Posterior vena cava (tissue), 2 donors: ENCODE measurements at regions of chr9 and their contacts with region 1.

Region 1: GRCh38 chr9:35229066-35229778 is 67.4 kb downstream of the UNC13B start:
- DNase-seq: no peak

Region 2: DNA sequence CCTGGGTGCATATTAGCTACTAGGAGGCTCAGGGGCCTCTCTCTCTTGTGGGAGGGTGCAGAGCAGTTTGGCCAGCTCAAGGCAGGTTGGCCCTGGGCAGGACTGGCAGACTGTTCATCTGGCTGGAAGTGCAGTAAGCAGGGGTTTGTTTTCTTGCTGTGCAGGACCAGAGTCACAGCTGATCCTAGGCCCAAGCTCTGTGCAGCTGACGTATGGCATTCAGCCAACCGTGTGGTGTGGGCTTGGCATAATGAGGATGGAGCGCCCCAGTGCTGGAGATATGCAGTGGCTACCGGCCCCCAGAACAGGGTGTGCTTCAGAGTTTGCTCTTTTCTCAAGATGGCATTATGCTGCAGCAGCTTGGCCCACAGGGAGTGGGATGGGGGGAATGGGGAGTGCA is 302.2 kb before region 1 on chr9:
- intact Hi-C with region 1: no loop called
- DNase-seq: no peak

Region 3: GRCh38 chr9:35179347-35180287 is 49.6 kb before region 1 on chr9:
- intact Hi-C with region 1: loop called in 1 of 2 experiments (anchors 10 kb)
- DNase-seq: no peak

Region 4: DNA sequence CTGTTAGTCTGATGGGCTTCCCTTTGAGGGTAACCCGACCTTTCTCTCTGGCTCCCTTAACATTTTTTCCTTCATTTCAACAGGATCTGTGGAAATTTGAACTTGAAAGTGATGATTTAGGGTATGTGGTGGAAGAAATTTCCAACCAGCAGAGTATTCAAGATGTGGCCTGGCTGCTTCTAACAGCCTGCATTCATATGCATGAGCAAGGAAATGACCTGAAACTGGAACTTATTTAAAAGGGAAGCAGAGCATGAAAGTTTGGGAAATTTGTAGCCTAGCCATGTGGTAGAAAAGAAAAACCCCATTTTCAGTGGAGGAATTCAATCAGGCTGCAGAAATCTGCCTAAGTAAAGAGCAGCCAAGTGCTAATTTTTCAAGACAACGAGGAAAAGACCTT is 25.7 kb before region 1 on chr9:
- intact Hi-C with region 1: no loop called
- DNase-seq: no peak

Region 5: GRCh38 chr9:35306283-35306682 is 77.1 kb after region 1 on chr9:
- intact Hi-C with region 1: no loop called
- DNase-seq: no peak